MCF 10A (cell line): ENCODE measurements at regions of chr1 and their contacts with region 1.

Region 1: DNA sequence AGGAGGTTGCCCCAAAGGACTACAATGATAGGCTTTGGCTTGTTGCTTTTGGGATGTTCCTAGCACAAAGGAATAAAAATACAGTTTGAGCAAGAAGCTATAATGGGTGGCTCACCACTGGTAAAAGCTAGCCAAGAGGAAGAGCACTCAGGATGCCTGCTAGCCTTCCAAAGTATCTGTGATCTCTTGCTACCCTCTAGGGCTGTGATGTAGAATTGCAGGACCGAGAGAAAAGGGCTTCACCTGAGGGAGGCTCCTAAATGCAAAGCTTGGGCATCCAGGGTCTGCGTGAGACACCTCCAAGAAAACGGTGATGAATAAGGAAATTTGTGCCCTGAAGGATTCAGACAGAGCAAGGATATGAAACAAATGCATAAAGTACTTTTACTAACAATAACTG is 17.7 kb downstream of the IVL start:
- DNase-seq: peak; percentile 82
- H3K4me3 Mint-ChIP-seq: no peak overlapping the region
- H3K27ac Mint-ChIP-seq: no peak overlapping the region
- H3K4me1 Mint-ChIP-seq: peaks cover 11% of the 10 kb centered on the region
- H3K27me3 Mint-ChIP-seq: no peaks in the 10 kb centered on the region
- CTCF ChIP-seq: peak; percentile 98

Region 2: DNA sequence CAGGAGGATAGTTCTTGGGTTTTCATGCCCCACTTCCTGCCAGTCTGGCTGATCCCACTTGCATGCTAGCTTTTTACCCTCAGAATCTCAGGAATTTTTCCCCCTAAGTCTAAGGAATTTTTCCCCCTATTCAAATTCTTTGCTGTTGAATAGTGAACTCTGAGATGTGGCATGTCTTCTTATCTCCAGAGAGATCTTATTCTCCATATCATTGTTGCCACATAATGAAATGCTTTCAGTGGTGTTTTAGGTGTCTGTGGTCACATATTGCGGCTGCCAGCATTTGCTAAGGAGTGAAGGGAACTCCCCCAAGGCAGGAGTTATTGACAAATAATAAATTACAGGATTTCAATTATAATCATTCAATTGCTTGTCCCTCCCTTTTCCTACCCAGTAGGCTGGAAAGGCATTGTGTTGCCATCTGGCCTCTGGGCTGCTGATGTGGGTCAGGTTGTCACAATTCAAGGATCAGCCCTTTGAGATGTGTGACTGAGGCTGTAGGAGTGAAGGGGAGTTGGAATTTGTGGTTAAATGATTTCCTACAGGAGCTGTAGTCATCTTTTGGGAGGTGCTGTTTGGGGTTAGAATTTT is 597.2 kb before region 1 on chr1:
- CTCF ChIA-PET with region 1: no interaction called
- POLR2A ChIA-PET with region 1: no interaction called
- intact Hi-C with region 1: no loop called
- DNase-seq: no peak
- H3K4me3 Mint-ChIP-seq: no peak overlapping the region
- H3K27ac Mint-ChIP-seq: no peak overlapping the region
- H3K4me1 Mint-ChIP-seq: no peaks in the 10 kb centered on the region
- H3K27me3 Mint-ChIP-seq: no peaks in the 10 kb centered on the region
- CTCF ChIP-seq: no peak

Region 3: DNA sequence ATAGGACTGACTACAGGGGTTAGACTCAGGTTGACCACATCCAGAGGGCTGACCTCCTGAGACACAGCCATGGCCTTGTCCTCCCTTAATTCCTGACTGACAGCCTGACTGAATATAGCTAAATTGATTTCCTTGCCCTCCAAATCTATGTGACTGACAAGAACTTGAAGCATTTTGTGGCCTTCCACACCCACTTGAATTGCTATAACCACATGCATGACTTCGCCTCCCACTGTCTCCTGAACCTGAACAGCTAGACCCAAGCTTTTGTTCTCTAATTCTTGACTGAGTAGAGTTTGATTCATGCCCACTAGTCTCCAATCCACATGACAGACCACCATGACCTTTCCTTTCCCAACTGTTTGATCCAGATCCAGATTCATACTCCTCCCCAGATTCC is 569.4 kb before region 1 on chr1:
- CTCF ChIA-PET with region 1: no interaction called
- POLR2A ChIA-PET with region 1: no interaction called
- intact Hi-C with region 1: no loop called
- DNase-seq: no peak
- H3K4me3 Mint-ChIP-seq: no peak overlapping the region
- H3K27ac Mint-ChIP-seq: no peak overlapping the region
- H3K4me1 Mint-ChIP-seq: no peaks in the 10 kb centered on the region
- H3K27me3 Mint-ChIP-seq: peaks cover 15% of the 10 kb centered on the region
- CTCF ChIP-seq: no peak

Region 4: GRCh38 chr1:152533327-152533938 is 392.7 kb before region 1 on chr1:
- CTCF ChIA-PET with region 1: no interaction called
- POLR2A ChIA-PET with region 1: no interaction called
- intact Hi-C with region 1: no loop called
- DNase-seq: peak; percentile 88
- H3K4me3 Mint-ChIP-seq: no peak overlapping the region
- H3K27ac Mint-ChIP-seq: no peak overlapping the region
- H3K4me1 Mint-ChIP-seq: peaks cover 5% of the 10 kb centered on the region
- H3K27me3 Mint-ChIP-seq: no peaks in the 10 kb centered on the region
- CTCF ChIP-seq: peak; percentile 99

Region 5: GRCh38 chr1:152566681-152567080 is 359.4 kb before region 1 on chr1 and contains the start of gene LCE3E:
- CTCF ChIA-PET with region 1: no interaction called
- POLR2A ChIA-PET with region 1: no interaction called
- intact Hi-C with region 1: no loop called
- DNase-seq: peak; percentile 24
- H3K4me3 Mint-ChIP-seq: no peak within 1 kb of the TSS
- H3K27ac Mint-ChIP-seq: no peak within 1 kb of the TSS
- H3K4me1 Mint-ChIP-seq: peaks cover 8% of the 10 kb centered on the region
- H3K27me3 Mint-ChIP-seq: no peaks in the 10 kb centered on the region
- CTCF ChIP-seq: no peak
- total RNA-seq, gene LCE3E: not detected in 2 replicates

Region 6: GRCh38 chr1:152878042-152878441 is 48.0 kb before region 1 on chr1 and contains the start of gene SMCP:
- CTCF ChIA-PET with region 1: interaction called, 186 read pairs
- POLR2A ChIA-PET with region 1: no interaction called
- intact Hi-C with region 1: no loop called
- DNase-seq: peak; percentile 57
- H3K4me3 Mint-ChIP-seq: no peak within 1 kb of the TSS
- H3K27ac Mint-ChIP-seq: no peak within 1 kb of the TSS
- H3K4me1 Mint-ChIP-seq: peaks cover 20% of the 10 kb centered on the region
- H3K27me3 Mint-ChIP-seq: no peaks in the 10 kb centered on the region
- CTCF ChIP-seq: peak; percentile 55
- total RNA-seq, gene SMCP: not detected in 2 replicates

Region 7: GRCh38 chr1:152884966-152885624 is 41.0 kb before region 1 on chr1:
- CTCF ChIA-PET with region 1: interaction called, 21 read pairs
- POLR2A ChIA-PET with region 1: no interaction called
- intact Hi-C with region 1: no loop called
- DNase-seq: peak; percentile 90
- H3K4me3 Mint-ChIP-seq: no peak overlapping the region
- H3K27ac Mint-ChIP-seq: peak overlapping the region; percentile 25
- H3K4me1 Mint-ChIP-seq: peaks cover 60% of the 10 kb centered on the region
- H3K27me3 Mint-ChIP-seq: no peaks in the 10 kb centered on the region
- CTCF ChIP-seq: no peak